B cell (primary cell): ENCODE measurements at regions of chr6 and their contacts with region 1.

Region 1: DNA sequence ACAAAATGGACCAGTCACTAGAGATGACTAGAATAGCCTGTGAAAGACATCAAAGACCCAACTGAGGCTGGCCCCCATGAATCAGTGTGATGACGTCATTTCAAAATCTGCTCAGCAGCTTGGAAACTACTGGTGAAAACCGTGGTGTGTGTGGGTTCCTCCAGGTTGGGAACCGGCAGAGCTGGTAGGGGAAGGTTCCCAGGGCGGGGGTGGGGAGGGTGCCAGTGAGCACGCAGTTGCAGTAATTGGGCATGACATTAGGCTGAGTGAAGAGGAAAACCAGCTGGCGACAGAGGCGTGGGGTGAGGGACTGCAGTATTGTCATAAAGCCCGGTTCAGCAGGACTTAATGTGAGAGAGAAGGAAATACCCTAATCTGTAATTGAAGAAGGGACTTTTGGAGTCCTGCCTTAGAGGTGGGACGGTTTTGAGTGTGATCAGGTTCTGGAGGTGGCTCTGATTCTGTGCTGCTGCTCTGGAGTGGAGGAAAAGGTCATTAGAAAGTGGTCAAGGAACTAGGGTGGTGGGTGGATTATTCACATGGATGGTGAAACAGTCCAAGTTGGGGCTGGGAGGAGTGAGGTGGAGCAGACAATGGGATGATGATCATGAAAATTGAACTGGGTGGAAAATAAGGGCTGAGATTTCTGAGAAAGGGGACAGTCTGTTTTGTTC is 52.0 kb upstream of the MTHFD1L start:
- DNase-seq: peak; percentile 65
- ATAC-seq: peak; percentile 55
- H3K4me3 ChIP-seq: no peak overlapping the region
- H3K4me3 Mint-ChIP-seq: peak overlapping the region; percentile 73
- H3K27ac ChIP-seq: peak overlapping the region; percentile 45 to 85
- H3K27ac Mint-ChIP-seq: peak overlapping the region; percentile 95
- H3K4me1 ChIP-seq: peaks cover 0 to 9% of the 10 kb centered on the region in 2 donors
- H3K4me1 Mint-ChIP-seq: peaks cover 34% of the 10 kb centered on the region
- H3K27me3 ChIP-seq: no peaks in the 10 kb centered on the region
- H3K27me3 Mint-ChIP-seq: no peaks in the 10 kb centered on the region
- CTCF ChIP-seq: no peak

Region 2: DNA sequence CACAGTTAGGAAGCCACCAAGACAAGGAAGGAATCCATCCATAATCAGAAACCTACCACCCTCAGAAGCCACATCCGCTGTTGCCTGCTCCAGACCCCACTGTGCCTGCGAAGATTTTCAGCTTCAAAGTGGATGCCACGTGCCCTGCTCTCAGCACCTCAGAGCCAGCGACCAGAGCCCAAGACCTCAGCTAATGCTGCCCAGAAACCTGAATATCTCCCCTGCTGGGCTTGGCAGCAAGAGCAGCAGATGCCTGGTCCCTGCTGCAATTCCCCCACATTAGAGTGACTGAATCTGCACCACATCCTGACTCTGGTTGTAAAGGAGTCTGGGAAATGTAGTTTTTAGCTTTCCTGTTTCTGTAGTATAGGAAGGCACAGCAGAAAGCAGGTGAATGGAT is 733.9 kb before region 1 on chr6:
- CTCF ChIA-PET with region 1: interaction called, 33 read pairs
- POLR2A ChIA-PET with region 1: no interaction called
- intact Hi-C with region 1: loop called (anchors 1 kb)
- DNase-seq: no peak
- ATAC-seq: no peak
- H3K4me3 ChIP-seq: no peak overlapping the region
- H3K4me3 Mint-ChIP-seq: no peak overlapping the region
- H3K27ac ChIP-seq: no peak overlapping the region
- H3K27ac Mint-ChIP-seq: no peak overlapping the region
- H3K4me1 ChIP-seq: peaks cover 0 to 3% of the 10 kb centered on the region in 2 donors
- H3K4me1 Mint-ChIP-seq: peaks cover 2% of the 10 kb centered on the region
- H3K27me3 ChIP-seq: peaks cover 0 to 8% (median 6%) of the 10 kb centered on the region in 4 experiments
- H3K27me3 Mint-ChIP-seq: peaks cover 33% of the 10 kb centered on the region
- CTCF ChIP-seq: no peak

Region 3: DNA sequence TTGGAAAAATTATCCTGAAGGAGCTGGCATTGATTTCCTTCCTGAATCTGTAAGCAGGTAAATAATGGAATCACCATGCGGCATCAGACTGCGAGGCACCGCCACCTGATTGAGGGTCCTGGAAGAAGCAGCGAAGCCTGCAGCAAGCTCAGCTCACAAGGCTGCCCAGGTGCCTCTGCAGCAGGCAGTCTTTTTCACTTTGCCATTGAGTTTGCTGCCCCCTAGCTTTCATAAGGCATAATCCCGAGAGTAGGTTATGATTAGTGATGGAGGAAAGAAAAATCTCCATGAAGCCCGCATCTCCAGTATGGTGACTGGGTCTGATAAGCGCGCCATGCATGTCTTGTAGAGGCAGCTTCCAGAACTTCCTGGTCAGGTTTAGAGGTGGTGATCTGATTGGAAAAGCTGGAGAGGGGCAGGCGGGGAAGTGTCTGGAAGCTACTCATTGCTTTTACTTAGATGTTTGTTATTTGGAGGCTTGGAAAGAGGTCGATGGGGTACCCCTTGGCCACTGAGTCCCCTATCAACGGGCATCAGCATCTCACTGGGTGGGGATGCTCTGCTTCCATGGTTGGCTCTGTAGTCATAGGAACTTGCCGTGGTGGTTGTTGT is 418.0 kb before region 1 on chr6:
- CTCF ChIA-PET with region 1: interaction called, 29 read pairs
- POLR2A ChIA-PET with region 1: no interaction called
- intact Hi-C with region 1: no loop called
- DNase-seq: peak; percentile 65
- ATAC-seq: peak; percentile 74
- H3K4me3 ChIP-seq: no peak overlapping the region
- H3K4me3 Mint-ChIP-seq: no peak overlapping the region
- H3K27ac ChIP-seq: no peak overlapping the region
- H3K27ac Mint-ChIP-seq: no peak overlapping the region
- H3K4me1 ChIP-seq: no peaks in the 10 kb centered on the region
- H3K4me1 Mint-ChIP-seq: no peaks in the 10 kb centered on the region
- H3K27me3 ChIP-seq: peaks cover 0 to 7% (median under 1%) of the 10 kb centered on the region in 4 experiments
- H3K27me3 Mint-ChIP-seq: peaks cover 26% of the 10 kb centered on the region
- CTCF ChIP-seq: peak; percentile 84

Region 4: DNA sequence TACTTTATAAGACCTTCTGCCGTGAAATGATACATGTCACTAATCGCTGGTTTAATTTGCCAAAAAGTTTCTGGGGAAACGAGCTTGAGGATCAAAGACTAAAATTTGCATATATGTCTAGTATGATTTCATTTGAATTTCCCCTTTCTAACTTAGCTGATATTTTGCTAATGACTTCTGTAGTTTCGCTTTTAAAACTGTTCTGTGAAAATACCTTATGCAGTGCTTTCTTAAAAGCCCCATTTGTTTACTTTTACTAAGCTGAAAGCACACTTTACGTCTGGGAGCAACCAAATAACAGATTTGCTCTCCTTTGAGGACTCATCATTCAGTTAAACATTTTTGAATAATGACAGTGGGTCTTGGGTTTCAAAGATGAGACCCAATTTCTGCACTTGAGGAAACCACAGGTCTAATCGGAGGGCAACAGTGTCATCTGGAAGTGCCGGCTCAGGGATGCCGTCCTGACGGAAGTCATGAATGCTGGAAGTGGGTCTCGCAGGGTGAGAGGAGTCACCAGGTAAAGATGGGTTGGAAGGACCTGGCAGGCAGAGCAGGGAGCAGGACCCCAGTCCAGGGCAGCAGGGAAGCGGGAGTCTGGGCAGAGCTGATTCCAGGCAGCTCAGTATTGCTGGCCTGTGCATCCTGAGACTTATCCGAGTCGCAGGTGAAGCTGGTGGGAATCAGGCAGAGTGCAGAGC is 180.5 kb before region 1 on chr6:
- CTCF ChIA-PET with region 1: interaction called, 5 read pairs
- POLR2A ChIA-PET with region 1: interaction called, 4 read pairs
- intact Hi-C with region 1: loop called (anchors 10 kb)
- DNase-seq: peak; percentile 80
- ATAC-seq: peak; percentile 40
- H3K4me3 ChIP-seq: peak overlapping the region; percentile 55 to 85 (median 79)
- H3K4me3 Mint-ChIP-seq: peak overlapping the region; percentile 98
- H3K27ac ChIP-seq: peak overlapping the region; percentile 91 to 94
- H3K27ac Mint-ChIP-seq: peak overlapping the region; percentile 93
- H3K4me1 ChIP-seq: peaks cover 79 to 81% of the 10 kb centered on the region in 2 donors
- H3K4me1 Mint-ChIP-seq: peaks cover 85% of the 10 kb centered on the region
- H3K27me3 ChIP-seq: no peaks in the 10 kb centered on the region
- H3K27me3 Mint-ChIP-seq: no peaks in the 10 kb centered on the region
- CTCF ChIP-seq: no peak

Region 5: DNA sequence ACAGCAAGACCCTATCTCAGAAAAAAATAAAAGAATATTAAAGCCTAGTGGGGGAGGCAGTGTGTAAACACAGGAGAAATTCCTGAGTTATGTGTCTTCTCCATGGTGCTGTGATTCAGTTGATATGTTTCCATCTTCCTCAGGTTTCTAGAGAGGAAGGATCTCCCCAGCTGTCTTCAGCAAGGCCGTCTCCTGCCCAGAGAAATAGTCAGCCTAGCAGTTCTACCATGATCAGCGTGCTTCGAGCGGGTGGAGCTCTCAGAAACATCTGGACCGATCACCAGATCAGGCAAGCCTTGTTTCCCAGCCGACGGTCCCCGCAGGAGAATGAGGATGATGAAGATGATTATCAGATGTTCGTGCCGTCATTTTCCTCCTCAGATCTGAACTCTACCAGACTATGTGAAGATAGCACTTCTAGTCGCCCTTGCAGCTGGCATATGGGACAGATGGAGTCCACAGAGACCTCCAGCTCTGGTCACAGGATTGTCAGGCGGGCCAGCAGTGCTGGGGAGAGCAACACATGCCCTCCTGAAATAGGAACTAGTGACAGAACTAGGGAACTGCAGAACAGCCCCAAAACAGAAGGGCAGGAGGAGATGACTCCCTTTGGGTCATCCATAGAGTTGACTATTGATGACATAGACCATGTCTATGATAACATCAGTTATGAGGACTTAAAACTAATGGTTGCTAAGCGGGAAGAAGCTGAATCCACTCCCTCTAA is 17.1 kb after region 1 on chr6:
- CTCF ChIA-PET with region 1: interaction called, 13 read pairs
- POLR2A ChIA-PET with region 1: no interaction called
- intact Hi-C with region 1: no loop called
- DNase-seq: no peak
- ATAC-seq: no peak
- H3K4me3 ChIP-seq: no peak overlapping the region
- H3K4me3 Mint-ChIP-seq: no peak overlapping the region
- H3K27ac ChIP-seq: no peak overlapping the region
- H3K27ac Mint-ChIP-seq: peak overlapping the region; percentile 12
- H3K4me1 ChIP-seq: no peaks in the 10 kb centered on the region
- H3K4me1 Mint-ChIP-seq: peaks cover 3% of the 10 kb centered on the region
- H3K27me3 ChIP-seq: no peaks in the 10 kb centered on the region
- H3K27me3 Mint-ChIP-seq: no peaks in the 10 kb centered on the region
- CTCF ChIP-seq: no peak

Region 6: DNA sequence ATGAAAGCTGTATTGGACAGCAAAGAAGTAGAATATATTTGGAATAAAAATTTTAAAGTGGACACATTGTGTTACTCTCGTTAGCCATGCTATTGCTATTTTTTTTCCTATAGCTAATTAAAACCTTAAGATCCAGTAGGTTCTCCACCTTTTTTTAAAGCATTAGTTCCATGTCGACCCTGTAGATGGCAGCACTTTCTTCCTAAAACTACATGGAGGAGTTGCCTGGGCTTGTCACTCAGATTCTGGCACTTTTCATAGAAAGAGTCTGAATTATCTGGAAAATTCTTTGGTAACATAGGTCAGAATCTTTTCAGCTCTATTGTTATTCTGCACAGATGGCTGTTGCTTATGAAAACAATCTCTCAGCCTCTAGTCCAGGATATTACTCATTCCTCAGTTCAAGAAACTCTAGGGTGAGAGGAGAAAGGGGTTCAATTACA is 952.0 kb after region 1 on chr6:
- CTCF ChIA-PET with region 1: no interaction called
- POLR2A ChIA-PET with region 1: no interaction called
- intact Hi-C with region 1: no loop called
- DNase-seq: peak; percentile 67
- ATAC-seq: peak; percentile 61
- H3K4me3 ChIP-seq: no peak overlapping the region
- H3K4me3 Mint-ChIP-seq: no peak overlapping the region
- H3K27ac ChIP-seq: no peak overlapping the region
- H3K27ac Mint-ChIP-seq: no peak overlapping the region
- H3K4me1 ChIP-seq: peaks cover 5 to 12% of the 10 kb centered on the region in 2 donors
- H3K4me1 Mint-ChIP-seq: peaks cover 22% of the 10 kb centered on the region
- H3K27me3 ChIP-seq: no peaks in the 10 kb centered on the region
- H3K27me3 Mint-ChIP-seq: no peaks in the 10 kb centered on the region
- CTCF ChIP-seq: peak; percentile 94